GM13976 (cell line): ENCODE measurements at regions of chr4 and their contacts with region 1.

Region 1: DNA sequence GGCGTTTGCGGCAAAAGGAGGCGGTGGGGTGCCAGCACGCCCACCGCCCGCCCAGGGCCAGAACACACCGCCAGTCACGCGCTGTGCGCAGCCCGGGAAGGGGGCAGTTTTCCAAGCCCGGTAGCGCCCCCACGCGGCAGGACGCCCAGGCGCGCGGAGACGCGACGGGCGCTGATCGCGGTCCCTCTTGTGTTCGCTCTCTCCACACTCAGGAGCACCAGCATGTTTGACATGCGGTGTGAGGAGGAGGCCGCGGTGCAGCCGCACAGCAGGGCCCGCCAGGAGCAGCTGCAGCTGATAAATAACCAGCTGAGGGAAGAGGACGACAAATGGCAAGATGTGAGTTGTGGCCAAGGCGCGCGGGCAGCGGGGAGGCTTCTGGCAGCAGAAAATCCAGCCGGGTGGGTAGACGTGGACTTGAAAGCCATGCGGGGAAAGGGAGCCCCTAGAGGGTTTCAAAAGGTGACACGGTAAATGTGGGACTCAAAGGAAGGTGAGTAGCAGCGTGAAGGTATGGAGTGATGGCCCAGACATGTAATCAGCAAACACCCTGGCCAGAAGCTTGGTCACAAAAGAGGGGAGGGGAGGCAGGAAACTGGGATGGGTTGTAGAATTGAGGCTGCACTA is 104.1 kb downstream of the PHOX2B start:
- DNase-seq: peak; percentile 41
- CTCF ChIP-seq: peak; percentile 45

Region 2: DNA sequence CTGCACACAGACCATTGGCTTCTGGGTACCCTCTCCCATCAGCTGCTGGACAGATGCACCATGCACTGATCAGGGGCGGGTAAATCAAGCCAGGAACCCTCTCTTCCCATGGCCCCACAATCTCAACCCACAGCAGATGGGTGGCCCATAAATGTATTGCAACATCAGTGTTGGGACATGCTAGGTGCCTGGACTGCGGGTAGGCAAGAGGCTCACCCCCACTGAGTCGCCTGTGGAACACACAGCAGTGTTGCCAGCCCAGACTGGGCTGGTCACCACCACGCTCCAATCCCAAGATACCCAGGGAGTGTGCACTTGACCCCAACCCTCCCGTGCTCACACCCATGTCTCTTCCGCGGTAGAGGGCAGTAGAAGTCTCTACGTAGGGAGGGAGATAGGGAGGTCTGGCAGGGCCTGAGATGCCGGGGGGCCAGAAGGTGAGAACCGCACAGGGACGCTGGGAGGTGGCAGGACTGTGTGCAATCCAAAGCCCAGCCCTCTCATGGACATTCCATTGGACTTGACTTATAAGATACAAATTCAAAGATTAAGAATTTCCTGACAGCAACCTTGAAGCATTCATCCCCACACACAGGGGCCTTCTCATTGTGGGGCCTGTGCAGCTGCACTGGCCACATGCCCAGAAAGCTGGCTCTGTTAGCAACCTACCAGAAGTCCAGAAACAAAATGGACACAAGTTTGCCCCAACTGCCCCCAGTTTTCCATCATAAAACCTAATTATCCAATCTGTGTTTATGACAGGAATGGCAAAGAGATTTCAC is 710.9 kb before region 1 on chr4:
- in situ Hi-C with region 1: loop called (anchors 25 kb)
- DNase-seq: no peak
- CTCF ChIP-seq: no peak

Region 3: GRCh38 chr4:41339812-41340809 is 304.3 kb before region 1 on chr4:
- in situ Hi-C with region 1: no loop called
- DNase-seq: no peak
- CTCF ChIP-seq: no peak